ENCODE measurements at regions of chr17 and their contacts with region 1.

Region 1: GRCh38 chr17:4100883-4101756 is 41.7 kb downstream of the ZZEF1 start:
- DNase-seq: no peak
- H3K4me3 ChIP-seq: no peak overlapping the region
- H3K27ac ChIP-seq: peak overlapping the region; percentile 75
- H3K4me1 ChIP-seq: peaks cover 15% of the 10 kb centered on the region
- H3K27me3 ChIP-seq: no peaks in the 10 kb centered on the region
- CTCF ChIP-seq: no peak

Region 2: GRCh38 chr17:3990386-3991127 is 110.6 kb before region 1 on chr17:
- intact Hi-C with region 1: no loop called
- DNase-seq: no peak
- H3K4me3 ChIP-seq: no peak overlapping the region
- H3K27ac ChIP-seq: no peak overlapping the region
- H3K4me1 ChIP-seq: peaks cover 26% of the 10 kb centered on the region
- H3K27me3 ChIP-seq: peaks cover 4% of the 10 kb centered on the region
- CTCF ChIP-seq: no peak

Region 3: DNA sequence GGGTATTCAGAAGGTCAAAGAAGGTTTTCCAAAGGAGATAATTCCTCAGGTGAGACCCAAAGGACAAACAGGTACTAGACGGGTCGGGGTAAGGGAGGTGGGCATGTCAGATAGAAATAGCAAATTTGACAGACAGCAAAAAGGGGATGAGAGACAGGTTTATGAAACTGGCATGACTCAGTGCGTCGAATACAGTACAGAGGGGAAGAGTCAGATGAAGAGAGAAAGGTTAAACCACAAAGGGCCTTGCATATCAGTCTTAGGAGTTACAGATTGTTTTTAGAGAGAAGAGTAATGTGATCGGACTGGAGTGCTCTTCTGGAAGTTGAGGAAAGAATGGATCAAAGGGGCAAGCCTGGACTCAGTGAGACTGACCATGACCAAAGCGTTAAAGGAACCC is 46.7 kb before region 1 on chr17:
- intact Hi-C with region 1: loop called (anchors 10 kb)
- DNase-seq: no peak
- H3K4me3 ChIP-seq: no peak overlapping the region
- H3K27ac ChIP-seq: no peak overlapping the region
- H3K4me1 ChIP-seq: no peaks in the 10 kb centered on the region
- H3K27me3 ChIP-seq: no peaks in the 10 kb centered on the region
- CTCF ChIP-seq: no peak